ENCODE measurements at regions of chr3 and their contacts with region 1.

Region 1: GRCh38 chr3:14480207-14481025 is 59.7 kb downstream of the GRIP2 start:
- DNase-seq: peak in 1 of 6 donors; percentile 36
- ATAC-seq: peak in 2 of 4 donors; percentile 30 to 60
- H3K4me3 ChIP-seq: no peak overlapping the region
- H3K27ac ChIP-seq: no peak overlapping the region
- H3K4me1 ChIP-seq: no peaks in the 10 kb centered on the region
- H3K27me3 ChIP-seq: no peaks in the 10 kb centered on the region
- CTCF ChIP-seq: no peak

Region 2: GRCh38 chr3:14175383-14176037 is 304.9 kb before region 1 on chr3:
- intact Hi-C with region 1: no loop called
- DNase-seq: no peak
- ATAC-seq: no peak
- H3K4me3 ChIP-seq: no peak overlapping the region
- H3K27ac ChIP-seq: no peak overlapping the region
- H3K4me1 ChIP-seq: peaks cover 8 to 29% (median 16%) of the 10 kb centered on the region in 3 donors
- H3K27me3 ChIP-seq: no peaks in the 10 kb centered on the region
- CTCF ChIP-seq: no peak

Region 3: GRCh38 chr3:14274999-14275961 is 205.1 kb before region 1 on chr3:
- intact Hi-C with region 1: loop called in 1 of 3 experiments (anchors 10 kb)
- DNase-seq: no peak
- ATAC-seq: no peak
- H3K4me3 ChIP-seq: no peak overlapping the region
- H3K27ac ChIP-seq: no peak overlapping the region
- H3K4me1 ChIP-seq: no peaks in the 10 kb centered on the region
- H3K27me3 ChIP-seq: no peaks in the 10 kb centered on the region
- CTCF ChIP-seq: no peak

Region 4: GRCh38 chr3:14660907-14661306 is 180.5 kb after region 1 on chr3:
- intact Hi-C with region 1: no loop called
- DNase-seq: no peak
- ATAC-seq: no peak
- H3K4me3 ChIP-seq: no peak overlapping the region
- H3K27ac ChIP-seq: no peak overlapping the region
- H3K4me1 ChIP-seq: peaks cover 3 to 8% (median 5%) of the 10 kb centered on the region in 3 donors
- H3K27me3 ChIP-seq: no peaks in the 10 kb centered on the region
- CTCF ChIP-seq: no peak

Region 5: GRCh38 chr3:14803101-14803980 is 322.9 kb after region 1 on chr3:
- intact Hi-C with region 1: no loop called
- DNase-seq: no peak
- ATAC-seq: peak in 1 of 4 donors; percentile 40
- H3K4me3 ChIP-seq: no peak overlapping the region
- H3K27ac ChIP-seq: no peak overlapping the region
- H3K4me1 ChIP-seq: no peaks in the 10 kb centered on the region
- H3K27me3 ChIP-seq: no peaks in the 10 kb centered on the region
- CTCF ChIP-seq: no peak

Measured in pancreas (tissue), 10 donors.